ENCODE measurements at regions of chr11 and their contacts with region 1.

Region 1: GRCh38 chr11:126698576-126698975 is 302.0 kb downstream of the KIRREL3 start:
- DNase-seq: peak in 1 of 10 donors; percentile 77
- H3K4me3 ChIP-seq: no peak overlapping the region
- H3K27ac ChIP-seq: peak overlapping the region in 17 of 59 donors; percentile 4 to 62 (median 37)
- H3K27me3 ChIP-seq: no peaks in the 10 kb centered on the region
- CTCF ChIP-seq: no peak

Region 2: DNA sequence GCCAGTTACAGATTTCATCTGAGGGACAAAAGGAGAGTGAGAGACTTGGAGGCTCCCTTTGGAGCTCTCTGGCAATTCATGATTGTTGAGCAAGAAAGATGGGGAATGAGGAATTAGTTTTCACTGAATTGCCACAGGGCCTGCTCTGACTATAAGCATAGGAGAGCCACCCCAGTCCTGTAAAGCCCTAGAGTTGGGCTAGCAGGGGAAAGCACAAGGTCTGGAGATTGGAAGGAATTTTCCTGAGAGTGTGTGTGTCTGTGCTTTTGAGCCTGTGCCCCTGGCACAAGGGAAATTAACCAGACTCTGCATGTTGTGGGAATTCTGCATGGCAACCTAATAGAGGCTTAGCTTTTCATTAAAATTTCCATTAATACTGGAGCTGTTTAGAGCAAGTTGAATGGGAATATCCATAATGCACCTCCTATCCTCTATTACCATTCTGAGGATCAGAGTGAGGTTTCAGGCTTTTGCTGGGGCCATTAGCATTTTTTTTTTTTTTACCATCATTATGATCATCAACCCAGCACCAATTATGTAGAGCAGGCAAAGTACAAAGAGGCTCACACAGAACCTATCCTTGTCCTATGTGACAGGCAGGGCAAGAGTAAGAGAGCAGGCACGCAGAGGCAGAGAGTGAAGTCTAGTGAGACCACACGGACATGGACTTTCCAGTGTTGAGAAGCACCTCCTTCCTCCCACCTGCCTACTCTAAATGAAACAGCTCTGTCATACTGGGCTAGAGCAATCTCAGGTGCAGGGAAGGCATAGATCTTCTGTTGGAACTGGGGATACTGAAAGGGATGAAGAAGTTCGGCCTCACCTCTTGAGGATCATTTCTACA is 34.6 kb before region 1 on chr11:
- intact Hi-C with region 1: loop called in 1 of 2 experiments (anchors 2 kb)
- DNase-seq: no peak
- H3K4me3 ChIP-seq: no peak overlapping the region
- H3K27ac ChIP-seq: peak overlapping the region in 41 of 59 donors; percentile 0 to 93 (median 48)
- H3K27me3 ChIP-seq: no peaks in the 10 kb centered on the region
- CTCF ChIP-seq: no peak

Region 3: DNA sequence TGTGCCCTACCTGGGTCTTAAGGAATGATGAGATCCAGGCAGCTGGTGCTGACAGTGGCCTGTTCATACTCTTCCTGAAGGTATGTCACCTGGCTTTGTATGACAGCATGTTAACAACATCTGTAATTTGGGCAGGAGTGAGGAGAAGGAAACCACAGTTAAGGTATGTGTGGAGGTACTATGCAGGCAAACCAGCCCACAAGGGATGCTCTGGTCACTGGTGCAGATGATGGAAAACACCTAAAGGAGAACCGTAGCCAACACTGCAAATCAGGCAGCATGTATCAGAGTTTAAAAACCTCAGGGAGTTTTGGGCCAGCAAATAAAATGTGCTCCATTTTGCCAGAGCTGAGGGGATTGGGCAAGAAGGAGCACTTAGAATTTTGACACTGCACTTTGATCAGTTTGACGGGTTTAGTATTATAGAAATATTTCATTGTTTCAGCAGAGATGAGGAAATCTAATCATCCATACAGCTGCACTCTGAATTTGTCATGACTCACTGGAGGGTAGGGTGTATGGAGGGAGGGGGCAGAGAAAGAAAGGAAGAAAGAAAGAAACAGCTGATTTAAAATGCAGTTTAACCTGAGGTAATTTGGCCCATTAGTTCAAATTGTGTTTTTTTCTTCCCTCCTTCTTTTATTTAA is 41.0 kb after region 1 on chr11:
- intact Hi-C with region 1: no loop called
- DNase-seq: no peak
- H3K4me3 ChIP-seq: no peak overlapping the region
- H3K27ac ChIP-seq: peak overlapping the region in 1 of 59 donors; percentile 37
- H3K27me3 ChIP-seq: no peaks in the 10 kb centered on the region
- CTCF ChIP-seq: no peak

Measured in dorsolateral prefrontal cortex (tissue), 120 donors.